ENCODE measurements at regions of chr4 and their contacts with region 1.

Region 1: DNA sequence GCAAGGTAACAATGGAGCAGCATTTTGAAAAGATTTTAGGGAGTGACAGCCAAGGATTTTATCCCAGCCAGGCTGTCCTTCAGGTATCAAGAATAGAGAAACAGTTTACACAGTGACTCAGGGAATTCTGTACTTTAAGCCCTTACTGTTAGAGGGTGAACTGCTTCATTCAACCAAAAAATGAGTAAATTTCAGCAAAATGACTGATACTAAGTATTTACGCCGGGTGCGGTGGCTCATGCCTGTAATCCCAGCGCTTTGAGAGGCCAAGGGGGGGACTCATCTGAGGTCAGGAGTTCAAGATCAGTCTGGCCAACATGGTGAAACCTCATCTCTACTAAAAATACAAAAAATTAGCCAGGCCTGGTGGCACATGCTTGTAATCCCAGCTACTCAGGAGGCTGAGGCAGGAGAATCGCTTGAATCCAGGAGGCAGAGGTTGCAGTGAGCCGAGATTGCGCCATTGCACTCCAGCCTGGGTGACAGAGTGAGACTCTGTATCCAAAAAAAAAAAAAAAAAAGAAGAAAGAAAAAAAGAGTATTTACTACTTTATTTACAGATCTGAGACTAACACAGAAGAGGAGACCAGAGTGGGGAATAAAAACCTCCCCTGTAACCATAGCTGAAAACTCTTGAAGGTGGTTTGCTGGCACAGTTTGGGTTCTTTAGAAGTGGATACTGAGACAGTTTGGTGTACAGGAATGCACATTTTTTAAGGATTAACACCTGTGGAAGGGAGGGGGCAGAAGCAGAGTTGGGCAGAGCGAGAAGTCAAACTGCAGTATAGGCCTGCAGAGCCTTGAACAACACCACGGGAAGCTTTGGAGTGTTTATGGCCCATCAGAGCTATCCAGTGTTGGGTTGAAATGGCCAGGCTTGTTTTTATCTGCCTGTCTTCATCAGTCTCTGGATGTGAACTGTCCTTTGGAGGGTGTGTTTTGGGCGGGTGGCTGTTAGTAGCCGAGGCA is 40.5 kb downstream of the TMEM131L start:
- DNase-seq: peak; percentile 57
- ATAC-seq: peak; percentile 89
- H3K4me3 ChIP-seq: no peak overlapping the region
- H3K27ac ChIP-seq: peak overlapping the region; percentile 32
- H3K4me1 ChIP-seq: peaks cover 49% of the 10 kb centered on the region
- H3K27me3 ChIP-seq: no peaks in the 10 kb centered on the region
- CTCF ChIP-seq: no peak

Region 2: DNA sequence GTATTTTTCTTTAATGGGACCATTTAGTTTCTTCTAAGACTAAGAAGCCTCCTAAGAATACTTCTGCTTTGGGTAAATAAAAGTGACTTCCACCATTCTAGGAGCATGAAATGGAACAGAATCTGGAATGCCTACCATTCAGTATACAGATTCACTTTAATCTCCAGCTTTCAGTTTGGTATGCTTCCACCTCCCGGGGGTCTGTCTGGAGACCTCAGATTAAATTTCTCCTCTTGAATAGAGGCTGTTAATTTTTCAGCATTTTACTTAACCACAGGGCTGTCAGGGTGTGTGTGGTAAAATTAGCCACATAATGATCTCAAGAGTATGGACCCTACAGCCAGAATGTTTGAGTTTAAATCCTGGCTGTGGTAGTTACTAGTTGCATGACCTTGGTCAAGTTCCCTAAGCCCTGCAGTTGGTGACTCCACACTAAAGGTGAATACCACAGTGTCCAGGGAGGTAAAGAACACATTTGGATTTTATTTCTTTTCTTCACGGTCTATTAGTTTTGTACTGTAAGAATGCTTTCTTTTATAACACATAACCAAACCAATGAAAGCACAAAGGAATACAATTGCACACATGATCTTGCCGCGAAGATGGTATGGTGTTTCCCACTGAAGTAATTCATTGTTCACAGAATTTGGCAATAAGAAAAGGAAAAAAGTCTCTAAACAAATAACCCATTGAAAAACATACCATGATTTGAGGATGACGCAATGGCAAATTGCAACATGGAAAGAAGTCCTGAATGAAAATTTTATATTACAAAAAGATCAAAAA is 339.7 kb before region 1 on chr4:
- CTCF ChIA-PET with region 1: no interaction called
- POLR2A ChIA-PET with region 1: no interaction called
- intact Hi-C with region 1: no loop called
- DNase-seq: no peak
- ATAC-seq: no peak
- H3K4me3 ChIP-seq: no peak overlapping the region
- H3K27ac ChIP-seq: no peak overlapping the region
- H3K4me1 ChIP-seq: no peaks in the 10 kb centered on the region
- H3K27me3 ChIP-seq: no peaks in the 10 kb centered on the region
- CTCF ChIP-seq: no peak

Region 3: GRCh38 chr4:153555730-153556433 is 49.3 kb after region 1 on chr4:
- CTCF ChIA-PET with region 1: no interaction called
- POLR2A ChIA-PET with region 1: no interaction called
- intact Hi-C with region 1: loop called (anchors 2 kb)
- DNase-seq: peak; percentile 34
- ATAC-seq: peak; percentile 83
- H3K4me3 ChIP-seq: no peak overlapping the region
- H3K27ac ChIP-seq: peak overlapping the region; percentile 53
- H3K4me1 ChIP-seq: peaks cover 24% of the 10 kb centered on the region
- H3K27me3 ChIP-seq: no peaks in the 10 kb centered on the region
- CTCF ChIP-seq: no peak